Esophagus muscularis mucosa (tissue), 4 donors: ENCODE measurements at regions of chr5 and their contacts with region 1.

Region 1: GRCh38 chr5:115535479-115536035 is 9.0 kb downstream of the FEM1C start:
- DNase-seq: no peak
- H3K4me3 ChIP-seq: no peak overlapping the region
- H3K27ac ChIP-seq: no peak overlapping the region
- H3K4me1 ChIP-seq: peaks cover 62 to 99% (median 87%) of the 10 kb centered on the region in 4 donors
- H3K27me3 ChIP-seq: no peaks in the 10 kb centered on the region
- CTCF ChIP-seq: no peak
- EP300 ChIP-seq: no peak
- POLR2A ChIP-seq: no peak

Region 2: DNA sequence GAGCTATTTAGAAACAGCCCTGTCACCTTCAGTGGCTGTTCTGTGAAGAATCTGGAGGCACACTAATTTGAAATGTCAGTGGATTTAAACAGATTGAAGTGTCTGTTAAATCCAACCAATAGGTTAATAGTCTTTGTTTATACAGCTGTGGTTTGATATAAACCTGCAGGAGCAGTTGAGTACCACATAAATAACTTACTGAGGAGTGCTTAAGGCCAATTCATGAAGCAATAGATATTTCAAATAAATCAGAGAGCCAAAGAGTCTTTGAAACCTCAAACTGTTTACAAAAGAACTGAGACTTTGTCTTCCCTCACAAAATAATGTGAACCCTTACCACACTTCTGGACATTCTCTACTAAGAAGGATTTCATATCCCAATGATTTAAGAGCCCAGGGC is 102.9 kb before region 1 on chr5:
- intact Hi-C with region 1: loop called (anchors 5 kb)
- DNase-seq: no peak
- H3K4me3 ChIP-seq: no peak overlapping the region
- H3K27ac ChIP-seq: peak overlapping the region in 3 of 4 donors; percentile 15 to 56 (median 45)
- H3K4me1 ChIP-seq: peaks cover 0 to 76% (median 57%) of the 10 kb centered on the region in 4 donors
- H3K27me3 ChIP-seq: no peaks in the 10 kb centered on the region
- CTCF ChIP-seq: no peak
- EP300 ChIP-seq: no peak
- POLR2A ChIP-seq: no peak